GM13976 (cell line): ENCODE measurements at regions of chr11 and their contacts with region 1.

Region 1: GRCh38 chr11:83819933-83820549 is 533.9 kb upstream of the CCDC90B start:
- DNase-seq: no peak
- CTCF ChIP-seq: peak; percentile 15

Region 2: DNA sequence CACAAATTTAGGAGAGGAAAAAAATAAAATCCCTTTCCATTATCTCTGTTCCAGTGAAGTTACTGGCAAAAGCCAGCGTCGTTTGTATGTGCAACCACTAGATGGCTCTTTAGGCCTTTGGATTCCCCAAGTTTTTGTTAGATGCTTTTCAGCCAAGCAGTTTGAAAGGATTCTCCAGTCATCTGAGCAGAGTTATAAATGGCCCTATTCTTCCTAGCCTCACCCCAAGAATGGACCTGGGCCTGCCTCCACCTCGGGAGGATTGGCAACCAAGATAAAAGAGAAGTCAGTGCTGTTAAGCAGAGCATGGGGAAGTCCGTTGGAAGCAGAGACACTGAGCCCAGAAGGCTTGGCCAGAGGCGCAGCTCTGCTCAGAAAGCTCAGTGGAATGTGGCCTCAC is 1101.7 kb before region 1 on chr11:
- in situ Hi-C with region 1: loop called (anchors 25 kb)
- DNase-seq: peak; percentile 48
- CTCF ChIP-seq: peak; percentile 58

Region 3: DNA sequence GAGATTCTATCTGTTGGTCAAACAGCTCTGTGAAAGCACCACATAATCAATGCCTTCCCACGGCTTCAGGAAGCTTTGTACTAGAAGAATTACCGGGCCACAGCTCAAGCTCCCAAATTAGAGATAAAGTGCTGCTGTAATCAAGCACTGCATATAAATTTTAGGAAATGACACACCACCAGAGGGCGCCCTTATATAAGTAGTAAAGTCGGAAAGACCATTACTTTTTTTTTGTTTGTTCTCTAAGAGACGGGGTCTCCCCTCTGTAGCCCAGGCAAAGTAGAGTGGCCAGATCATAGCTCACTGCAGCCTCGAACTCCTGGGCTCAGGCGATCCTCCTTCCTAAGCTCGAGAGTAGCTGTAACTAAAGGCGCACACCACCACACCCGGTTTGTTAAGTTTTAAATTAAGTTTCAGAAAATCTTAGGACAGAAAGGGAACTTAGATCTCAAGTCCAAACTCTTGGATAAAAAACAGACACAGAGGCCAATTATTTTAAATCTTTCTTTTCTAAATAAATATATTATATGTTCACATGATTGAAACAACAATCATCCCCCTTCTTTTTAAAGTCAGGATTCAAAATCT is 952.5 kb before region 1 on chr11:
- in situ Hi-C with region 1: loop called (anchors 25 kb)
- DNase-seq: peak; percentile 58
- CTCF ChIP-seq: peak; percentile 58

Region 4: DNA sequence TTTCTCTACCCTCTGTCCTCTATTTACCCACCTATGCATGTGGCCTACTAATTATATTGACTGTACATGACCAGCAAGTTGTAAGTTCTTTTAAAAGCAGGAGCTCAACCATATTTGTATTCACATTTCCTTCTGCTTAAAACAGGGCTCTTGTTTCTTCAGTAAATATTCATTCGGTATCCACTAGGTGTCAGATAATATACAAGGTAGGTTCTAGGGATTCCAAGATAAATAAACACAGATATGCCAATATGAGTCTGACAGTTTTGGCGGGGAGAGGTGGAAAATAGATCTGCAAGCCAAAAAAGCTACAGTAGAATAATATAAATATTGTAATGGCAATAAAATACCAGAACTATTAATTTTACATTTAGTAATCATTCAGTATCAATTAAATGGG is 733.0 kb before region 1 on chr11:
- in situ Hi-C with region 1: loop called (anchors 25 kb)
- DNase-seq: no peak
- CTCF ChIP-seq: no peak

Region 5: DNA sequence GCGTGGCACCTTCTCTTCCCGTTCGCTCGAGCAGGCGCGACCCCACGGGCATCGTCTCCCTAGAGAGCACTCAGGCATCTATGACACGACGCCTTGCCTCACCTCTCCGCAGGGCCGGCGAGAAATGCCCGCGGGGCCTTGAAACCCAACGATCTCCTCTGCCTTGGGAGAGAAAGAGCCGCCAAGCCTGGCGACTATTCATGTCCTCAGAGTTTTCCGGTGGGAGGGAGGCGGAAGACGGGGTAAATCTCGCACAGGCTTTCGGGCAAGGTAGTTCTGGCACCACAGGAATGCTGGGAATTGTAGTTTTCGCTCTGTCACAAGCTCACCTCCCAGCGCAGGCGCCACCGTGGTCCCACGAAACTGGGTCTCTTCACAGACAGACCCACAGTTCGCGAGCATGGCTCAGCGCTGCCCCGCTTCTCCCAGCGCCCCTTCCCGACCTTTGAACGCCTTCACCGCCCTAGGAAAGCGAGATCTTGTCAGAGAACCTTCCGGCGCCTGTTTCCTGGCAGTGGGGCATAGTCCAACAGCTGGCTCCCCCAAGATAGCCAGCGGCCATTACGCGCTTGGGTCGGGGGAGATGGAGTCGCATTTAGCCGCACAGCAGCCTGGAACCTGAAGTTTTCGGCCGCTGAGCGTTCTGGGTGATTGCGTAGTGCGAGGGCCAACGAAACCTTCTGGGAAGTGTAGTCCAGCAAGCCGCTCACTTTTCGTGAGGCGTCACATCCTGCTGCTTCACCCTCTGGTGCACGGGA is 534.1 kb before region 1 on chr11 and contains the start of gene CCDC90B:
- in situ Hi-C with region 1: loop called (anchors 25 kb)
- DNase-seq: peak; percentile 94
- CTCF ChIP-seq: peak; percentile 67

Region 6: DNA sequence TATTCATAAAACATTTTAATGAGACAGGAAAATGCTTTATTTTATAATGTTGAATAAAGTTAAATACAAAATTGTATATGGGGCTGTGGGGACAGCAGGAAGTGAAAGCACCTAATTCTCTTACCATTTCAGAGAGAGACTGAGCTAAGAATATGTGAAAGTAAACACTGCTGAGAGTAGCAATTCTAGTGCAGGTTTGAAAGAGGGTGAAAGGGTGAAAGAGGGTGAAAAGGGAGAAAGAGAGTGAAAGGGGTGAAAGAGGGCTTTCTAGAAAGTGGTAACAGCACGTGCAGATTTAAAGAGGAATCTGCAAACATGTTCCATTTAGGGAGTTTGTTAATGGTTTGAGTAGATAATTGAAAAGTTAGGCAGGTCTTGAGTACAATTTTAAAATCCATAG is 118.1 kb after region 1 on chr11:
- in situ Hi-C with region 1: no loop called
- DNase-seq: no peak
- CTCF ChIP-seq: no peak